Gastrocnemius medialis (tissue), 4 donors: ENCODE measurements at regions of chr10 and their contacts with region 1.

Region 1: GRCh38 chr10:84139126-84140035 is at the start of gene GHITM:
- DNase-seq: peak; percentile 99
- ATAC-seq: peak; percentile 98
- H3K4me3 ChIP-seq: peak within 1 kb of the TSS; percentile 90 to 99 (median 94)
- H3K27ac ChIP-seq: peak within 1 kb of the TSS; percentile 96 to 99 (median 97)
- H3K4me1 ChIP-seq: peaks cover 21 to 22% of the 10 kb centered on the region in 2 donors
- H3K27me3 ChIP-seq: no peaks in the 10 kb centered on the region
- CTCF ChIP-seq: peak; percentile 55 to 66 (median 60)
- POLR2A ChIP-seq: peak; percentile 93 to 95
- total RNA-seq, gene GHITM: 307 to 444 (median 358) TPM

Region 2: GRCh38 chr10:84328418-84329195 is 189.2 kb after region 1 on chr10 and contains the start of gene CCSER2:
- in situ Hi-C with region 1: loop called in 2 of 4 experiments (anchors 10 to 25 kb)
- intact Hi-C with region 1: loop called (anchors 5 kb)
- DNase-seq: peak; percentile 95 to 97
- ATAC-seq: peak; percentile 90 to 94
- H3K4me3 ChIP-seq: peak within 1 kb of the TSS; percentile 51 to 92 (median 66)
- H3K27ac ChIP-seq: peak within 1 kb of the TSS; percentile 79 to 97 (median 86)
- H3K4me1 ChIP-seq: peaks cover 27 to 35% of the 10 kb centered on the region in 2 donors
- H3K27me3 ChIP-seq: no peaks in the 10 kb centered on the region
- CTCF ChIP-seq: peak in 4 of 5 experiments; percentile 12 to 28 (median 22)
- POLR2A ChIP-seq: peak; percentile 91 to 93
- total RNA-seq, gene CCSER2: 39.8 to 61.8 (median 49.2) TPM

Region 3: DNA sequence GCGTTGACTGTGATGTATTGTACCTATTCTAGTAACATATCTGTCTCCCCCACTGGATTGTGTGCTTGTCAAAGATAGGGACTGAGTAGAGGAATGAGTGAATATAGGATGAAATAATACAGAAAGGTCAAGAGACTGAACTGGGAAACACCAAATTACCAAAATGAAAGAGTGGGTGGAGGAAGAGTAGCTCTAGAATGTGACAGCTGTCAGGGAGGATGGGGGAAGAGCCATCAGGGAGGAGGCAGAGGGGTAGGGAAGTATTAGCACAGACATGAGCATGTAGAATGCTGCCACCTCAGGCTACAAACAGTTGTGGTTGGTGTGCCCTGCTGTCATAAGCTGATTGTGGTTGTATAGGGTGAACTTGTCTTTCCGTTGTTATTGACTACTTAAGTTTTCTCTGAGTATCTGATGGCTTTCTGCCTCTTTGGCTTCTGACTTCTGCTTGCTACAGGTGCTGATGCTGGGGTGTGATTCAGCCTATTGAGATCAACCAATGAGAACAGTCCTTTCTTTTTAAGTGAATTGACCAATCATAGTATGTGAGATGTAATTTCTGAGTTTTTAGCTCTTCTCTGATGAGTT is 194.6 kb after region 1 on chr10:
- in situ Hi-C with region 1: loop called in 2 of 4 experiments (anchors 10 to 25 kb)
- intact Hi-C with region 1: loop called (anchors 5 kb)
- DNase-seq: no peak
- ATAC-seq: no peak
- H3K4me3 ChIP-seq: no peak overlapping the region
- H3K27ac ChIP-seq: no peak overlapping the region
- H3K4me1 ChIP-seq: peaks cover 42 to 63% of the 10 kb centered on the region in 2 donors
- H3K27me3 ChIP-seq: no peaks in the 10 kb centered on the region
- CTCF ChIP-seq: no peak
- POLR2A ChIP-seq: no peak

Region 4: GRCh38 chr10:84429926-84430520 is 290.6 kb after region 1 on chr10:
- in situ Hi-C with region 1: no loop called
- intact Hi-C with region 1: loop called (anchors 10 kb)
- DNase-seq: peak in 1 of 2 donors; percentile 61
- ATAC-seq: peak in 1 of 2 donors; percentile 71
- H3K4me3 ChIP-seq: no peak overlapping the region
- H3K27ac ChIP-seq: no peak overlapping the region
- H3K4me1 ChIP-seq: peaks cover 55 to 68% of the 10 kb centered on the region in 2 donors
- H3K27me3 ChIP-seq: no peaks in the 10 kb centered on the region
- CTCF ChIP-seq: peak; percentile 33 to 74 (median 60)
- POLR2A ChIP-seq: no peak